ENCODE measurements at regions of chr11 and their contacts with region 1.

Region 1: DNA sequence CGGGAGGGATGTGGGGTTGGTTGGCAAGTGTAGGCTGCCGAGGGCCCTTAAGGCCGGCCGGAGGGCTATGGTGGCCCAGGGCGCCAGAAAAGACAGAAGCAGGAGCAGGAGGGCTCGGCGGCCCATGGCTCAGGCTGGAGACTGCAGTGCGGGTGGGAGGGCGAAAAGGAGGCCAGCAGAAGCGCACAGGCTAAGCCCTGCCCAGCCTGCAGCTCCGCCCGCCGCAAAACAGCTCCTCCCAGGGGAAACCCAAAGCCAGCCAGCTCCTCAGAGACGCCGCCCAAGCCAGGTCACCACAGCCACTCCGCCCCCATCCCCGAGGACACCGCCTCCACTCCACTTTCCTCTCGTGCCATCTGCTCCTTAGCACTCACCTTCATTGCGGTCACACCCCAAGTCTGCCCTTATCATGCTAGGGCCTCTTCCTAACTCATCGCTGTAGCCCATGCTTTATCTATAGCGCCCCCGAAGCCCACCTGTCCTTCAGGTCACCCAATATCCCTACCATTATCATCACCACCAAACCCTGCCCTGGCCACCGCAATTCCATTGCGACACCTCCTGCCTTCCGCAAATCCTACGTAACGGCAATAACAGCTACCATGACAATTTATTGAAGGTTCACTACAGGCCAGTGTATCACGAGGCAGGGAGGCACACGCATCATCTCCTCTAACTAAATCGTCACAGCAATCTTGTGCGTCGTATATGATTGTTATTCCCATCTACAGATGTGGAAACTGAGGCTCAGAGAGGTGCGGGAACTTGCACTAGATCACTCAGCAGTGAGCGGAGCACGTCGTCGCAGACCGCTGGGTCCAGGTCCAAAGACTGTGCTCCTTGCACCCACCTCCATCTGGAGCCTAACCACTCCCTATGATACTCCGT is at the start of gene PRCP:
- DNase-seq: peak; percentile 84 to 96 (median 92)
- ATAC-seq: peak; percentile 69
- H3K4me3 ChIP-seq: peak within 1 kb of the TSS; percentile 76 to 93
- H3K4me3 Mint-ChIP-seq: peak within 1 kb of the TSS; percentile 99
- H3K27ac ChIP-seq: peak within 1 kb of the TSS; percentile 94 to 96
- H3K27ac Mint-ChIP-seq: peak within 1 kb of the TSS; percentile 100
- H3K4me1 ChIP-seq: peaks cover 26% of the 10 kb centered on the region
- H3K4me1 Mint-ChIP-seq: peaks cover 48% of the 10 kb centered on the region
- H3K27me3 ChIP-seq: no peaks in the 10 kb centered on the region
- H3K27me3 Mint-ChIP-seq: no peaks in the 10 kb centered on the region
- CTCF ChIP-seq: no peak
- total RNA-seq, gene PRCP: 23.9 to 27.8 TPM

Region 2: DNA sequence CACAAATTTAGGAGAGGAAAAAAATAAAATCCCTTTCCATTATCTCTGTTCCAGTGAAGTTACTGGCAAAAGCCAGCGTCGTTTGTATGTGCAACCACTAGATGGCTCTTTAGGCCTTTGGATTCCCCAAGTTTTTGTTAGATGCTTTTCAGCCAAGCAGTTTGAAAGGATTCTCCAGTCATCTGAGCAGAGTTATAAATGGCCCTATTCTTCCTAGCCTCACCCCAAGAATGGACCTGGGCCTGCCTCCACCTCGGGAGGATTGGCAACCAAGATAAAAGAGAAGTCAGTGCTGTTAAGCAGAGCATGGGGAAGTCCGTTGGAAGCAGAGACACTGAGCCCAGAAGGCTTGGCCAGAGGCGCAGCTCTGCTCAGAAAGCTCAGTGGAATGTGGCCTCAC is 182.2 kb before region 1 on chr11:
- CTCF ChIA-PET with region 1: no interaction called
- POLR2A ChIA-PET with region 1: no interaction called
- intact Hi-C with region 1: loop called in 1 of 2 experiments (anchors 1 kb)
- DNase-seq: peak in 3 of 9 experiments; percentile 8 to 48 (median 15)
- ATAC-seq: peak; percentile 36
- H3K4me3 ChIP-seq: no peak overlapping the region
- H3K4me3 Mint-ChIP-seq: no peak overlapping the region
- H3K27ac ChIP-seq: no peak overlapping the region
- H3K27ac Mint-ChIP-seq: no peak overlapping the region
- H3K4me1 ChIP-seq: no peaks in the 10 kb centered on the region
- H3K4me1 Mint-ChIP-seq: no peaks in the 10 kb centered on the region
- H3K27me3 ChIP-seq: no peaks in the 10 kb centered on the region
- H3K27me3 Mint-ChIP-seq: peaks cover 6% of the 10 kb centered on the region
- CTCF ChIP-seq: peak; percentile 67

Region 3: GRCh38 chr11:82927254-82927880 is 26.8 kb after region 1 on chr11:
- CTCF ChIA-PET with region 1: interaction called, 3 read pairs
- POLR2A ChIA-PET with region 1: interaction called, 4 read pairs
- intact Hi-C with region 1: loop called in 1 of 2 experiments (anchors 1 kb)
- DNase-seq: peak in 6 of 9 experiments; percentile 11 to 83 (median 31)
- ATAC-seq: peak; percentile 98
- H3K4me3 ChIP-seq: no peak overlapping the region
- H3K4me3 Mint-ChIP-seq: peak overlapping the region; percentile 26
- H3K27ac ChIP-seq: no peak overlapping the region
- H3K27ac Mint-ChIP-seq: peak overlapping the region; percentile 60
- H3K4me1 ChIP-seq: peaks cover 40% of the 10 kb centered on the region
- H3K4me1 Mint-ChIP-seq: peaks cover 53% of the 10 kb centered on the region
- H3K27me3 ChIP-seq: no peaks in the 10 kb centered on the region
- H3K27me3 Mint-ChIP-seq: no peaks in the 10 kb centered on the region
- CTCF ChIP-seq: peak; percentile 89

Region 4: GRCh38 chr11:82959987-82960778 is 59.7 kb after region 1 on chr11:
- CTCF ChIA-PET with region 1: interaction called, 9 read pairs
- POLR2A ChIA-PET with region 1: interaction called, 11 read pairs
- intact Hi-C with region 1: loop called (anchors 1 kb)
- DNase-seq: peak in 7 of 9 experiments; percentile 25 to 89 (median 42)
- ATAC-seq: peak; percentile 78
- H3K4me3 ChIP-seq: peak overlapping the region; percentile 23 to 38
- H3K4me3 Mint-ChIP-seq: peak overlapping the region; percentile 55
- H3K27ac ChIP-seq: peak overlapping the region; percentile 79 to 89
- H3K27ac Mint-ChIP-seq: peak overlapping the region; percentile 98
- H3K4me1 ChIP-seq: peaks cover 92% of the 10 kb centered on the region
- H3K4me1 Mint-ChIP-seq: peaks cover 87% of the 10 kb centered on the region
- H3K27me3 ChIP-seq: no peaks in the 10 kb centered on the region
- H3K27me3 Mint-ChIP-seq: no peaks in the 10 kb centered on the region
- CTCF ChIP-seq: no peak

Region 5: GRCh38 chr11:82998697-82999096 is 98.2 kb after region 1 on chr11:
- CTCF ChIA-PET with region 1: no interaction called
- POLR2A ChIA-PET with region 1: no interaction called
- intact Hi-C with region 1: no loop called
- DNase-seq: no peak
- ATAC-seq: no peak
- H3K4me3 ChIP-seq: no peak overlapping the region
- H3K4me3 Mint-ChIP-seq: no peak overlapping the region
- H3K27ac ChIP-seq: no peak overlapping the region
- H3K27ac Mint-ChIP-seq: no peak overlapping the region
- H3K4me1 ChIP-seq: peaks cover 36% of the 10 kb centered on the region
- H3K4me1 Mint-ChIP-seq: peaks cover 42% of the 10 kb centered on the region
- H3K27me3 ChIP-seq: no peaks in the 10 kb centered on the region
- H3K27me3 Mint-ChIP-seq: no peaks in the 10 kb centered on the region
- CTCF ChIP-seq: no peak

Region 6: GRCh38 chr11:83193315-83194280 is 293.1 kb after region 1 on chr11 and contains the start of gene ANKRD42:
- CTCF ChIA-PET with region 1: interaction called, 3 read pairs
- POLR2A ChIA-PET with region 1: interaction called, 21 read pairs
- intact Hi-C with region 1: loop called (anchors 1 kb)
- DNase-seq: peak; percentile 53 to 96 (median 86)
- ATAC-seq: peak; percentile 67
- H3K4me3 ChIP-seq: peak within 1 kb of the TSS; percentile 70 to 94
- H3K4me3 Mint-ChIP-seq: peak within 1 kb of the TSS; percentile 100
- H3K27ac ChIP-seq: peak within 1 kb of the TSS; percentile 97 to 98
- H3K27ac Mint-ChIP-seq: peak within 1 kb of the TSS; percentile 100
- H3K4me1 ChIP-seq: peaks cover 30% of the 10 kb centered on the region
- H3K4me1 Mint-ChIP-seq: peaks cover 50% of the 10 kb centered on the region
- H3K27me3 ChIP-seq: no peaks in the 10 kb centered on the region
- H3K27me3 Mint-ChIP-seq: no peaks in the 10 kb centered on the region
- CTCF ChIP-seq: no peak
- total RNA-seq, gene ANKRD42: 11.4 to 12.7 TPM

Region 7: GRCh38 chr11:83285771-83286528 is 385.4 kb after region 1 on chr11 and contains the start of gene CCDC90B:
- CTCF ChIA-PET with region 1: interaction called, 4 read pairs
- POLR2A ChIA-PET with region 1: interaction called, 31 read pairs
- intact Hi-C with region 1: loop called (anchors 1 kb)
- DNase-seq: peak; percentile 87 to 99 (median 94)
- ATAC-seq: peak; percentile 89
- H3K4me3 ChIP-seq: peak within 1 kb of the TSS; percentile 78 to 86
- H3K4me3 Mint-ChIP-seq: peak within 1 kb of the TSS; percentile 98
- H3K27ac ChIP-seq: peak within 1 kb of the TSS; percentile 88 to 99
- H3K27ac Mint-ChIP-seq: peak within 1 kb of the TSS; percentile 100
- H3K4me1 ChIP-seq: peaks cover 23% of the 10 kb centered on the region
- H3K4me1 Mint-ChIP-seq: peaks cover 46% of the 10 kb centered on the region
- H3K27me3 ChIP-seq: no peaks in the 10 kb centered on the region
- H3K27me3 Mint-ChIP-seq: no peaks in the 10 kb centered on the region
- CTCF ChIP-seq: no peak
- total RNA-seq, gene CCDC90B: 22.7 to 24.8 TPM